HEK293 (cell line): ENCODE measurements at regions of chr1 and their contacts with region 1.

Region 1: DNA sequence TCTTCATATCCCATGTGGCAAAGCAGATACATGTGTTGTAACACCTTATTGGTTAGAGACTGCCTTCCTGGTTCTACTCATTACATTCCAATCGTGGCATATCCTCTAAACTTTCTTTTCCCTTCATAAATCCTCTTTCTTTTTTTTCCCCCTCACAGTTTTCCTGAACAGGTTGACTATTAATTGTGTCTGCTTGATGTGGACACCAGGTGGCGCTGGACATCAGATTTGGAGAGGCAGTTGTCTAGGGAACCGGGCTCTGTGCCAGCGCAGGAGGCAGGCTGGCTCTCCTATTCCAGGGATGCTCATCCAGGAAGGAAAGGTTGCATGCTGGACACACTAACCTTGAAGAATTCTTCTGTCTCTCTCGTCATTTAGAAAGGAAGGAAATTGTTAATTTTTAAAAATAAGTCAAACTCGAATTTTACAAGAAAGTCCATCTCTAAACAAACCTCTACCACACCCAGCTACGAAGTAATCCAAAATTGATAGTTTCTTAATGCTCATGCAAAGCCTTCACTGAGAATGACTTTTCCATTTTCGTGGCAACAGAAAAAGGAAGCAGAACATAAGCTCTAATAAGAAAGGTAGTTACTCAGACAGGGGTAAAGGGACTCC is 59.4 kb upstream of the ASB17 start:
- H3K4me3 ChIP-seq: no peak overlapping the region
- H3K27ac ChIP-seq: no peak overlapping the region
- H3K4me1 ChIP-seq: no peaks in the 10 kb centered on the region
- CTCF ChIP-seq: peak; percentile 83

Region 2: DNA sequence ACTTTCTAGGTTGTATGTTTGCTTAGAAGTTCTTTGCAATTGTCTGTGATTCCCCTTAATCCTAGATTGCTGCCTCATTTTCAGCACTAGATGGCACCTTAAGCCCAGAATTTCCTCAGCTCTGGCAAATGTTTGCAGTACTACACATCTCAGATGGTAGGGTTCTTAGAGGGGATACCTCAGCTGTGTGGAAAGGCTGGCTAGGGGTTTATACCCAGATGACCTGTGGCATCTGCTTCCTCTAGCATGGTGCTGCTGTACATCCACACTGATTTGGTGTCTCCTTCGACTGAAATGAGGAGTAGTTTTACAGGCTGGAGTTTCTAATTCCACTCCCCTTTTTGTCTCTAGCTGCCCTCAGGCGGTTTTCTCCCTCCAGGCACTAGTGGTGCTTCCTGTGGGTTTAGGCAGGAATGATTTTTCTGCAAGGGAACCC is 82.9 kb before region 1 on chr1:
- CTCF ChIA-PET with region 1: interaction called, 10 read pairs
- POLR2A ChIA-PET with region 1: no interaction called
- H3K4me3 ChIP-seq: no peak overlapping the region
- H3K27ac ChIP-seq: no peak overlapping the region
- H3K4me1 ChIP-seq: no peaks in the 10 kb centered on the region
- CTCF ChIP-seq: peak; percentile 33; the same call in 1 of the 2 replicates

Region 3: DNA sequence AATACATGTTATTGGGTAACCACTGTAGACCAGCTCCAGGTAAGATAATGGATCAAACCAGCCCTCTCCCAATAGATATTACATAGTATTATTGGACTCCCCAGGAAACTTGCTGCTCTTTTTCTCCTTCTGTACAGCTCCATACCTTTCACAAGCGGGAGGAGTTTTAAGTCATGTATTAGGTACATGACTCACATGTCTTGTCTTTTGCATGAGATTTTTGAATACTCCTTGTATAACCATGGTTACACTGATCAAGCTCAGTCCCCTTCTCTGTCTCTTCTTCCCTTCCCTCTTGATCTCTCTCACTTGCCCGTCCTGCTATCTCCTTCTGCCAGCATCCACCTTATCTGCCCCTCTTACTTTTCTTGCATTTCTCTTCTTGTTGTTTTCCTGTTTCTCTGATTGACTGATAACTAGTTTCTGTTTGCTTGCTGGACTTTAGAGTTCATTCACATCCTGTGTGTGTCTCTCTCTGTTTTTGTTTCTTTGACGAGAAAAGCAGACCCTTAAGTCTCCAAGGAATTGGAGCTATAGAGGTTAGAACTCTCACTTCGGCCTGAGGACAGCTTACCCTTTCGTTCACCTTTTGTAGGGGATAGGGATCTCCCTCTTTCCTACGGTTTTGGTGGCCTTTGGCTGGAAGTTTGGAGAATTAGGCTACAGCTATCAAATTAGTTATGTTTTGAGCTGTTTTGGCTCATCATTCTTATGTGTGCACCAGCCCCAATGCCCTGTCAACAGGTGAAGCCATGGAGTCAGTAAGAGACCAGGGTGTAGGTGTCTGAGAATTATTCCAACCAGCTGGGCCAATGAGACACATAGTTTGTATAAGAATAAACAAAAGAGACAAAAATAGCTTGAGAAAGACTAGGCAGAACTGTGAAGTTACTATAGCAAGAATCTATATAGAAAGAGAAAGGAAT is 10.4 kb before region 1 on chr1:
- CTCF ChIA-PET with region 1: interaction called, 15 read pairs
- POLR2A ChIA-PET with region 1: no interaction called
- H3K4me3 ChIP-seq: no peak overlapping the region
- H3K27ac ChIP-seq: no peak overlapping the region
- H3K4me1 ChIP-seq: no peaks in the 10 kb centered on the region
- CTCF ChIP-seq: no peak

Region 4: GRCh38 chr1:76190749-76191424 is 199.3 kb after region 1 on chr1:
- CTCF ChIA-PET with region 1: no interaction called
- POLR2A ChIA-PET with region 1: no interaction called
- H3K4me3 ChIP-seq: no peak overlapping the region
- H3K27ac ChIP-seq: no peak overlapping the region
- H3K4me1 ChIP-seq: peaks cover 2% of the 10 kb centered on the region; the same call in 1 of the 2 replicates
- CTCF ChIP-seq: no peak